Sciatic nerve (tissue), 2 donors: ENCODE measurements at regions of chr1 and their contacts with region 1.

Region 1: GRCh38 chr1:8394456-8395321 is 76.8 kb downstream of the SLC45A1 start:
- DNase-seq: no peak
- ATAC-seq: no peak

Region 2: DNA sequence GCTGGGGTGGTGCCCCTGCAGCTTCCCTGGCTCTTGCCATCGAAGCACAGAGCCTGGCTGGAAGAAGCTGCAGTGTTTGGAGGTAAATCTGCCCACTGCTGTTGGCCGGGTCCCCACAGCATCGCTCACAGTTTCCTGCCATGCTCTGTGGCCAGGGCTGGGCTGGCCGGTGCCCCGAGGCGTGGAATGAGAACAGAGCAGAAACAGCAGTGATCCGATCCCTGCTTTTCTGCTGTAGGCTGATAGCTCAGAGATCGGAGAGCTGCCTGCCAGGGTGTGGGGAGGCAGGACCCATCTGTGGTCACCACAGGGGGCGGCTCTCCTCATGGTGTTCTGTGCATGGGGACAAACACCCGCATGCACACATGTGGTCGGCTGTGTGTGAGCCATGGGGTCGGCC is 65.2 kb before region 1 on chr1:
- intact Hi-C with region 1: no loop called
- DNase-seq: no peak
- ATAC-seq: no peak

Region 3: GRCh38 chr1:8374812-8375211 is 19.9 kb before region 1 on chr1:
- intact Hi-C with region 1: loop called (anchors 1 kb)
- DNase-seq: no peak
- ATAC-seq: no peak